ENCODE measurements at regions of chr2 and their contacts with region 1.

Region 1: DNA sequence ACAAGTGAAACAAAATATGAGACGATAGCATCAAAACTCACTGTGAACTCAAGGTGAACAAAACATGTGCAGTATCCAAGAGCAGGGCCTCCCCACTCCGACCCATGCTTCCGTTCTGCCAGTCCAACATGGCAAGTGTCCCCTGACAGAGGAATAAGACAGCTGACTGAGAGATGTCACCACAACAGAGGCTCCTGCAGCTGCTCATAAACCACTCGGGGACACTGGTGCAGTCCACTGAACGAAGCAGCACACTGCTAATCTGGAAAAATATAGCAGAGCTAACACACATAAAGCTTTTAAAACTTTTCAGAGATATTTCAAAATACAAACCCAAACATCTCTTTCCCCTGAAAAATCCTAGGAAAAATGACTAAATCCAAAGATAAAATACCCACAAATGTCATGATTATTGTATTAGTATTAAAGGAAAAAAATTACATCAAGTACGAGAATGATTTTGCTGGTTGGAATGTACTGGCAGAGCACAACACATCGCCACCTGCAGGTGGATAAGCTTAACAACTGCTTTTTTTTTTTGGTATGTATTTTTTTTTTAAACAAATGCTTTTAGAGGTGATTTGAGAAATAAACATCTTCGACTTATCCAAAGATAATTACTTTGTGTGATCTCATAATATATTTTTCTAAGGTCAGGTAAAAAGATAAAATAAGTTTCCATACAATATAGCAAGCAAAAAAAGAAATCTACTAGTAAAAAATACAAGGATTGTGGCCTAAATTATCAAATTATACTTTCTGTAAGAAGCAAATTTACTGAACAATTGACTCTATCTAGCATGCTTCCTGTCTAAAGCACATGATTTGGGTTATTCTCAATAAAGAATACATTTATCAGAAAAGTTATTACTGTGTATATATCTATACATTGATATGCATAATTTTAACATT is 18.6 kb downstream of the THADA start:
- DNase-seq: peak in 4 of 5 donors; percentile 51 to 54 (median 54)
- H3K4me3 ChIP-seq: no peak overlapping the region
- H3K4me3 Mint-ChIP-seq: no peak overlapping the region
- H3K27ac ChIP-seq: no peak overlapping the region
- H3K27ac Mint-ChIP-seq: peak overlapping the region in 1 of 7 donors; percentile 12
- H3K4me1 ChIP-seq: no peaks in the 10 kb centered on the region
- H3K4me1 Mint-ChIP-seq: peaks cover 2 to 15% (median 10%) of the 10 kb centered on the region in 4 donors
- H3K27me3 ChIP-seq: no peaks in the 10 kb centered on the region
- H3K27me3 Mint-ChIP-seq: no peaks in the 10 kb centered on the region

Region 2: GRCh38 chr2:42828487-42829425 is 748.5 kb before region 1 on chr2:
- CTCF ChIA-PET with region 1: interaction called, 14 read pairs
- POLR2A ChIA-PET with region 1: no interaction called
- intact Hi-C with region 1: loop called (anchors 2 kb)
- DNase-seq: peak; percentile 59 to 68 (median 63)
- H3K4me3 ChIP-seq: no peak overlapping the region
- H3K4me3 Mint-ChIP-seq: peak overlapping the region in 5 of 8 donors; percentile 17 to 57 (median 31)
- H3K27ac ChIP-seq: no peak overlapping the region
- H3K27ac Mint-ChIP-seq: peak overlapping the region in 1 of 7 donors; percentile 58
- H3K4me1 ChIP-seq: peaks cover 13% of the 10 kb centered on the region
- H3K4me1 Mint-ChIP-seq: peaks cover 8 to 20% (median 17%) of the 10 kb centered on the region in 4 donors
- H3K27me3 ChIP-seq: no peaks in the 10 kb centered on the region
- H3K27me3 Mint-ChIP-seq: peaks cover 3 to 10% of the 10 kb centered on the region in 2 donors

Region 3: DNA sequence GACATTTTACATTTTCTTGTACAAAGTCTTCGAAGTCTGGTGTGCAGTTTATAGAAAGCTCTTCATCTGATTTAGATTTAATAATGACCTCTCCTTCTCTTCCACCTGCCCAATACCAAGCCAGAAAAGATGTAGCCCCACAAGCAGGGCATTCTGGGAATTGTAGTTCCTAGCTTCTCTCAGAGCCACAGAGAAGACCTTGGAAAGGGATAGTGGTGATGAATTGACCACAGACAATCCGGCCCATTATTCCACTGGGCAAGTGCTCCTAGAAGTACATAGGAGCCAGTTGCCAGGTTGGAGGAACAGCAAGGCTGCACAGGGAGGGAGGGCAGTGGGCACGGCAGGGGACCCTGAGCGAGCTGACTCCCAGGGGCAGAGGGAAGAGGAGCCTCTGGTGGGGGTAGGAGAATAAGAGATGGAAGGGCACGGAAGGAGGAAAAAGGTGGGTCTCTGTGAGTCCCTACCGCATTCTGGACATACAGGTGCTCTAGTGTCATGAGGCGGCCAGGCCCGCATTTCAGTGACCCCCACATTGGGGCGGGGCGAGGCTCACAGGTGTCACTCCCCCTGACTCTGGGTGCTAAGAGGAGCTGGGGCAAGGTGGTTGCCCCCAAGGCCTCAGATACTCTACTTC is 632.3 kb before region 1 on chr2:
- CTCF ChIA-PET with region 1: interaction called, 16 read pairs
- POLR2A ChIA-PET with region 1: interaction called, 4 read pairs
- intact Hi-C with region 1: loop called (anchors 1 kb)
- DNase-seq: no peak
- H3K4me3 ChIP-seq: no peak overlapping the region
- H3K4me3 Mint-ChIP-seq: no peak overlapping the region
- H3K27ac ChIP-seq: no peak overlapping the region
- H3K27ac Mint-ChIP-seq: no peak overlapping the region
- H3K4me1 ChIP-seq: no peaks in the 10 kb centered on the region
- H3K4me1 Mint-ChIP-seq: peaks cover 0 to 2% (median under 1%) of the 10 kb centered on the region in 4 donors
- H3K27me3 ChIP-seq: no peaks in the 10 kb centered on the region
- H3K27me3 Mint-ChIP-seq: no peaks in the 10 kb centered on the region

Region 4: DNA sequence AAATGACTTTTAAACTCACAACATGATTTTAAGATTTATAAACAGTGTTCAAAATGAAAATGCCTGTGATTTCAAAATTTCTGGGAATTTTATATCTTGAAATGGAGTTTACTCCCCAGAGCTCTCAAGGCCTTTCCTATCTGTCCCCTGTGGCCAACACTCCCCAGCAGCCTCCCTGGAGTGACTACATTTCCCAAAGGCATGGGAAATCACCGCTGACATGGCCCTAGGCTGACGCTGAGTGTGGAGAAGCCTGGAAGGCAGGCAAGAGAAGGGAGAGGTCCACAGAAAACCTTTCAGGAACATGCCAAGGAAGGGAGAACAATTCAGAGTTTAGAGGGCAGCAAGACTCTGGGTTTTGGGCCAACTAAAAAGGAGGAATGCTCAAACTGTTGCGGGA is 330.6 kb before region 1 on chr2:
- CTCF ChIA-PET with region 1: no interaction called
- POLR2A ChIA-PET with region 1: no interaction called
- intact Hi-C with region 1: no loop called
- DNase-seq: no peak
- H3K4me3 ChIP-seq: no peak overlapping the region
- H3K4me3 Mint-ChIP-seq: no peak overlapping the region
- H3K27ac ChIP-seq: no peak overlapping the region
- H3K27ac Mint-ChIP-seq: no peak overlapping the region
- H3K4me1 ChIP-seq: no peaks in the 10 kb centered on the region
- H3K4me1 Mint-ChIP-seq: peaks cover 0 to 2% (median under 1%) of the 10 kb centered on the region in 4 donors
- H3K27me3 ChIP-seq: no peaks in the 10 kb centered on the region
- H3K27me3 Mint-ChIP-seq: no peaks in the 10 kb centered on the region

Region 5: GRCh38 chr2:43559391-43560230 is 17.6 kb before region 1 on chr2:
- CTCF ChIA-PET with region 1: interaction called, 53 read pairs
- POLR2A ChIA-PET with region 1: no interaction called
- intact Hi-C with region 1: no loop called
- DNase-seq: no peak
- H3K4me3 ChIP-seq: no peak overlapping the region
- H3K4me3 Mint-ChIP-seq: peak overlapping the region in 7 of 8 donors; percentile 45 to 77 (median 59)
- H3K27ac ChIP-seq: no peak overlapping the region
- H3K27ac Mint-ChIP-seq: peak overlapping the region; percentile 67 to 92 (median 82)
- H3K4me1 ChIP-seq: peaks cover 58% of the 10 kb centered on the region
- H3K4me1 Mint-ChIP-seq: peaks cover 30 to 46% (median 34%) of the 10 kb centered on the region in 4 donors
- H3K27me3 ChIP-seq: no peaks in the 10 kb centered on the region
- H3K27me3 Mint-ChIP-seq: no peaks in the 10 kb centered on the region

Region 6: GRCh38 chr2:43566461-43566729 is 10.8 kb before region 1 on chr2:
- CTCF ChIA-PET with region 1: interaction called, 53 read pairs
- POLR2A ChIA-PET with region 1: interaction called, 3 read pairs
- intact Hi-C with region 1: no loop called
- DNase-seq: no peak
- H3K4me3 ChIP-seq: no peak overlapping the region
- H3K4me3 Mint-ChIP-seq: peak overlapping the region in 3 of 8 donors; percentile 5 to 23 (median 13)
- H3K27ac ChIP-seq: no peak overlapping the region
- H3K27ac Mint-ChIP-seq: peak overlapping the region in 5 of 7 donors; percentile 12 to 44 (median 28)
- H3K4me1 ChIP-seq: peaks cover 58% of the 10 kb centered on the region
- H3K4me1 Mint-ChIP-seq: peaks cover 33 to 67% (median 50%) of the 10 kb centered on the region in 4 donors
- H3K27me3 ChIP-seq: no peaks in the 10 kb centered on the region
- H3K27me3 Mint-ChIP-seq: no peaks in the 10 kb centered on the region

Region 7: DNA sequence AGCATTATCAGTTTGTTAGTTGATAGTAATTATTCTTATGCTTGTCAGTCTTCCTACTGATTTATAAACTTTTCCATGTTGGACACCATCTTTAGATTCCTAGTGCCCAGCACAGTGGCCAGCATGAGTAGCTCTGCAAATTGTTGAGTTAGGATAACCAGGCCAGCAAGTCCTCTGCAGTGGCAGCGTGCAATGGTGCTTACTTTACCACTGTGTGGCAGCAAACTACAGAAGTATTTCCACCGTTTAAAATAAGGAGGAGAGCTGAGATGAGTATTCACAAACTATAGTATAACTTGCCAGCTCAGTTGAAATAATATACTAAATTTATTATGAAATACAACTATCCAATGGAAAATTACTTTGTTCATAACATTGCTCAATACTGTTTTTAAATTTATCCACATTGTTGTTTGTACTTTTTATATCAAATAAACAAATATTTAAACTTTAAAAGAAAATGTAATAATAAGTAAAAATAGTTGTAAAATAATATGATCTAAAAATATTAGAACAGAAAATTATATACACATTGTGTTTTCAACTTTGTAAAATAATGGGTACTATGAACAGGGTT is 27.9 kb after region 1 on chr2:
- CTCF ChIA-PET with region 1: interaction called, 10 read pairs
- POLR2A ChIA-PET with region 1: interaction called, 3 read pairs
- intact Hi-C with region 1: no loop called
- DNase-seq: peak in 2 of 5 donors; percentile 10 to 17
- H3K4me3 ChIP-seq: no peak overlapping the region
- H3K4me3 Mint-ChIP-seq: no peak overlapping the region
- H3K27ac ChIP-seq: no peak overlapping the region
- H3K27ac Mint-ChIP-seq: peak overlapping the region in 1 of 7 donors; percentile 95
- H3K4me1 ChIP-seq: peaks cover 4% of the 10 kb centered on the region
- H3K4me1 Mint-ChIP-seq: peaks cover 4 to 9% (median 5%) of the 10 kb centered on the region in 4 donors
- H3K27me3 ChIP-seq: no peaks in the 10 kb centered on the region
- H3K27me3 Mint-ChIP-seq: no peaks in the 10 kb centered on the region

Region 8: DNA sequence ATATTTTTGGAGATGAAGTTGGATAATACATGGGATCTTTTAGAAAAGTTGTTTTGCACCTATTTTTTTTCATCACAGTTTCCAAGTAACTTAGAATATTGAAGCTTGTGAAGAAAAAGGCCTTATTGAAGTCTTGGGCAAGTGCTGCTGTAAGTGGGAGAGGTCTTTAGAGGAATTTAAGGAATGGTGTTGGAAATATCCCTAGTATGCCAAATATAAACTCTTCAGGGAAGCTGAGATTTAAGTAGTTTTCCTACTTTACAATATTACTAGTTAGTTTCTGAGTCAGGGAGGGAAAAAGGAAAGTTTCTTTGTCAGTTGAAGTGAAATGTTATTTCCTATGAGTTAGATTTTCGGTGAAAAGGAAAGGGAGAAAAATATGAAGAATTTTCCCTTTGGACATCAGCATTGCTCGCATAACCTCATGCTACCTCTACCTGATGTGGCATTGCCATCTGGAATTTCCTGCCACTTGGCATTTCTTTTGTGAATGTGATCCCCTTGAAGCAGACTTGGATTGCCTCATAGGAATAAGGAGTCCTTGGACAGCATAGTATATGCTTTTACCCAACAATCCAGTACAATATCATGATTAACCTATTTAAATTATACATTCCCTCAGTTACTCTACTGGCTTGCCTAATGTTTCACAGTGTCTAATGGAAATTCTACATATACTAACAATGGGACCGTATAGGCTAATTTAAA is 71.9 kb after region 1 on chr2:
- CTCF ChIA-PET with region 1: no interaction called
- POLR2A ChIA-PET with region 1: no interaction called
- intact Hi-C with region 1: no loop called
- DNase-seq: no peak
- H3K4me3 ChIP-seq: no peak overlapping the region
- H3K4me3 Mint-ChIP-seq: no peak overlapping the region
- H3K27ac ChIP-seq: no peak overlapping the region
- H3K27ac Mint-ChIP-seq: no peak overlapping the region
- H3K4me1 ChIP-seq: no peaks in the 10 kb centered on the region
- H3K4me1 Mint-ChIP-seq: no peaks in the 10 kb centered on the region
- H3K27me3 ChIP-seq: no peaks in the 10 kb centered on the region
- H3K27me3 Mint-ChIP-seq: peaks cover 10% of the 10 kb centered on the region in 2 donors